Panc1 (cell line): ENCODE measurements at regions of chr10 and their contacts with region 1.

Region 1: DNA sequence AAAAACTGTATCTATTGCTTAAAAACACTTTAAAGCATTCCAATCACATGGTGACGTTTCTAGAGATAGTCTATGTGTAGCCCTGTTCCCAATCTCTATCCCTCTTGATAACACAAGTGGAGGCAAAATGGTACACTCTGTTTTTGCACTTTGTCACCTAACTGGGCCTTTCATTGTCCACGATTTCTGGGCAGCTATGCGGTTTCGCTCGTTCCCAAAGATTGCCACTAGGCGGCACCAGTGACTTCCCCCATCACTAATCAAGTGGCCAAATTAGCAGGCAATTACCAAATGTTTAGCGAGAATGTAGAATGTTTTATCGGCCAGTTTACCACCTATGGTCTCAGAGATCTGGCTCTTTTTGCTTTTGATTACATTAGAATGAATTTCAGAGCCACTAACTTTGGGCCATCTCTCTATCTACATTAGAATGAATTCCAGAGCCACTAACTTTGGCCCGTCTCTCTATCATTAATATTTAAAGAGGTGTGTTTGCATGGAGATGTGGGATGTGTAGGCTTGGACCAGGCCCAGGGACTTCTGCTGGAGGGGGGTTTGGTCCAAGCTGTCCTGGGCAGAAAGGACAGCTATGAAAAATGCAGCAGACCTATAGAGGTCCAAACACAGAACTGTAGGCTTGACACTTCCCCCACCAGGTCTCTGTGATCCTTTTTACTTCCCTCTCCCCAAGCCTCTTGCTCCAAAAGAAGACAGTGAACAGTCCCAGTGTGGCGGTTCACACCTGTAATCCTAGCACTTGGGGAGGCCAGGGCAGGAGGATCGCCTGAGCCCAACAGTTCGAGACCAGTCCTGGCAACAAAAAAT is 90.1 kb downstream of the EPC1 start:
- DNase-seq: peak; percentile 54
- ATAC-seq: peak; percentile 82
- H3K4me3 ChIP-seq: no peak overlapping the region
- H3K27ac ChIP-seq: no peak overlapping the region
- H3K4me1 ChIP-seq: no peaks in the 10 kb centered on the region
- H3K27me3 ChIP-seq: no peaks in the 10 kb centered on the region
- CTCF ChIP-seq: peak; percentile 89

Region 2: GRCh38 chr10:32041290-32042028 is 215.4 kb before region 1 on chr10:
- CTCF ChIA-PET with region 1: no interaction called
- POLR2A ChIA-PET with region 1: no interaction called
- in situ Hi-C with region 1: no loop called
- intact Hi-C with region 1: no loop called
- DNase-seq: no peak
- ATAC-seq: peak; percentile 68; the same call in 1 of the 2 replicates
- H3K4me3 ChIP-seq: no peak overlapping the region
- H3K27ac ChIP-seq: no peak overlapping the region
- H3K4me1 ChIP-seq: no peaks in the 10 kb centered on the region; the same call in 1 of the 2 replicates
- H3K27me3 ChIP-seq: no peaks in the 10 kb centered on the region
- CTCF ChIP-seq: no peak

Region 3: GRCh38 chr10:32346134-32346550 is 89.3 kb after region 1 on chr10:
- CTCF ChIA-PET with region 1: interaction called, 8 read pairs
- POLR2A ChIA-PET with region 1: interaction called, 5 read pairs
- in situ Hi-C with region 1: no loop called
- intact Hi-C with region 1: loop called (anchors 2 kb)
- DNase-seq: peak; percentile 62
- ATAC-seq: peak; percentile 93
- H3K4me3 ChIP-seq: peak overlapping the region; percentile 81 to 91
- H3K27ac ChIP-seq: peak overlapping the region; percentile 91
- H3K4me1 ChIP-seq: peaks cover 29% of the 10 kb centered on the region
- H3K27me3 ChIP-seq: no peaks in the 10 kb centered on the region
- CTCF ChIP-seq: peak; percentile 96

Region 4: GRCh38 chr10:32367793-32368453 is 111.1 kb after region 1 on chr10:
- CTCF ChIA-PET with region 1: no interaction called
- POLR2A ChIA-PET with region 1: no interaction called
- in situ Hi-C with region 1: no loop called
- intact Hi-C with region 1: loop called (anchors 2 kb)
- DNase-seq: peak; percentile 56
- ATAC-seq: peak; percentile 66; the same call in 1 of the 2 replicates
- H3K4me3 ChIP-seq: no peak overlapping the region; a peak in 1 of 4 replicates
- H3K27ac ChIP-seq: no peak overlapping the region; the same call in 1 of the 2 replicates
- H3K4me1 ChIP-seq: no peaks in the 10 kb centered on the region; the same call in 1 of the 2 replicates
- H3K27me3 ChIP-seq: no peaks in the 10 kb centered on the region
- CTCF ChIP-seq: peak; percentile 75